Left cardiac atrium (tissue), 4 donors: ENCODE measurements at regions of chr11 and their contacts with region 1.

Region 1: DNA sequence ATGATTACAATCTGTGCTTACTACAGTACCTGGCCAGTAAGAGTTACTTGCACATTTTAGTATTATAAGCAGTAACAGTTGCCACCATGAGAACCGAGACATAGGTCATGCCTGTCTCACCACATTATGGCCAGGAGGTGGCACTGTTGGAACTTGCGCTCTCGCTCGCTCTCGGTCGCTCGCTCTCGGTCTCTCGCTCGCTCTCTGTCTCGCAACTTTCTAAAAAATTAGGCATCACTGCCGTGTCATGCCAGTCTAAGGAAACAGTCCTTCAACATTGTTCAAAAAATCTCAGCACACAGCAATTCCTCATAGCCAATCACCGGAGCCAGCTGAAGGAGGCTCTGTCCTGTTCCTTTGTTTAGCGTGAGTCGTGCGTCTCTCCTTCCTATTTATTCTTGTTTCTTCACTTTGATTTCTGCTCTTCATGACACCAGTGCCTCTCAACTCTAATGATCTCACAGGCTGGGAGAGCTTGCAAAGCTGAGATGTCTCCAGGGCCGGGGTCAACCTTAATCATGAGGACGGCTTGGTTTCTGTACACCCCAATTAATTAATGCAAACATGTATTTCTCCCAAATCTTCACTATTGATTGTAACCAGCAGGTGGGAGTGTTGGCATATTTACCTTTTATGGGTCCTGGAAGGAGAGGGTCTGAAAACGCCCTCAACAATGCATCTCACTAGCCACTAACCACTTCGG is 6.3 kb upstream of the ADAMTS8 start:
- DNase-seq: peak; percentile 79
- ATAC-seq: peak; percentile 89 to 90

Region 2: GRCh38 chr11:130861902-130862860 is 427.5 kb after region 1 on chr11:
- intact Hi-C with region 1: loop called (anchors 1 to 2 kb)
- DNase-seq: peak; percentile 93
- ATAC-seq: peak; percentile 60 to 67

Region 3: GRCh38 chr11:130894322-130895025 is 459.8 kb after region 1 on chr11:
- intact Hi-C with region 1: loop called (anchors 1 to 10 kb)
- DNase-seq: peak; percentile 74
- ATAC-seq: peak in 1 of 2 donors; percentile 21